ENCODE measurements at regions of chr6 and their contacts with region 1.

Region 1: GRCh38 chr6:29705389-29706231 is 17.6 kb upstream of the HLA-F start:
- DNase-seq: peak in 1 of 5 donors; percentile 52
- H3K4me3 ChIP-seq: no peak overlapping the region
- H3K4me3 Mint-ChIP-seq: peak overlapping the region in 4 of 7 donors; percentile 4 to 72 (median 50)
- H3K27ac ChIP-seq: no peak overlapping the region
- H3K27ac Mint-ChIP-seq: peak overlapping the region in 7 of 8 donors; percentile 30 to 81 (median 70)
- H3K4me1 ChIP-seq: peaks cover 45% of the 10 kb centered on the region
- H3K4me1 Mint-ChIP-seq: peaks cover 30 to 57% (median 51%) of the 10 kb centered on the region in 3 donors
- H3K27me3 ChIP-seq: no peaks in the 10 kb centered on the region
- H3K27me3 Mint-ChIP-seq: peaks cover 18 to 34% of the 10 kb centered on the region in 2 donors

Region 2: GRCh38 chr6:29723262-29723665 is 17.7 kb after region 1 on chr6 and contains the start of gene HLA-F:
- CTCF ChIA-PET with region 1: interaction called, 8 read pairs
- POLR2A ChIA-PET with region 1: interaction called, 11 read pairs
- DNase-seq: peak in 4 of 5 donors; percentile 87 to 94 (median 88)
- H3K4me3 ChIP-seq: peak within 1 kb of the TSS; percentile 97
- H3K4me3 Mint-ChIP-seq: peak within 1 kb of the TSS; percentile 94 to 97 (median 97)
- H3K27ac ChIP-seq: peak within 1 kb of the TSS; percentile 96
- H3K27ac Mint-ChIP-seq: peak within 1 kb of the TSS; percentile 97 to 100 (median 99)
- H3K4me1 ChIP-seq: peaks cover 53% of the 10 kb centered on the region
- H3K4me1 Mint-ChIP-seq: peaks cover 53 to 54% (median 53%) of the 10 kb centered on the region in 3 donors
- H3K27me3 ChIP-seq: no peaks in the 10 kb centered on the region
- H3K27me3 Mint-ChIP-seq: peaks cover 0 to 10% of the 10 kb centered on the region in 2 donors
- total RNA-seq, gene HLA-F: 222 to 242 TPM

Region 3: GRCh38 chr6:29834564-29835436 is 129.2 kb after region 1 on chr6:
- CTCF ChIA-PET with region 1: interaction called, 10 read pairs
- POLR2A ChIA-PET with region 1: no interaction called
- DNase-seq: peak; percentile 34 to 73 (median 49)
- H3K4me3 ChIP-seq: no peak overlapping the region
- H3K4me3 Mint-ChIP-seq: no peak overlapping the region
- H3K27ac ChIP-seq: no peak overlapping the region
- H3K27ac Mint-ChIP-seq: no peak overlapping the region
- H3K4me1 ChIP-seq: no peaks in the 10 kb centered on the region
- H3K4me1 Mint-ChIP-seq: peaks cover 0 to 3% (median 0%) of the 10 kb centered on the region in 3 donors
- H3K27me3 ChIP-seq: peaks cover 23% of the 10 kb centered on the region
- H3K27me3 Mint-ChIP-seq: peaks cover 49 to 76% of the 10 kb centered on the region in 2 donors